ENCODE measurements at regions of chr2 and their contacts with region 1.

Region 1: DNA sequence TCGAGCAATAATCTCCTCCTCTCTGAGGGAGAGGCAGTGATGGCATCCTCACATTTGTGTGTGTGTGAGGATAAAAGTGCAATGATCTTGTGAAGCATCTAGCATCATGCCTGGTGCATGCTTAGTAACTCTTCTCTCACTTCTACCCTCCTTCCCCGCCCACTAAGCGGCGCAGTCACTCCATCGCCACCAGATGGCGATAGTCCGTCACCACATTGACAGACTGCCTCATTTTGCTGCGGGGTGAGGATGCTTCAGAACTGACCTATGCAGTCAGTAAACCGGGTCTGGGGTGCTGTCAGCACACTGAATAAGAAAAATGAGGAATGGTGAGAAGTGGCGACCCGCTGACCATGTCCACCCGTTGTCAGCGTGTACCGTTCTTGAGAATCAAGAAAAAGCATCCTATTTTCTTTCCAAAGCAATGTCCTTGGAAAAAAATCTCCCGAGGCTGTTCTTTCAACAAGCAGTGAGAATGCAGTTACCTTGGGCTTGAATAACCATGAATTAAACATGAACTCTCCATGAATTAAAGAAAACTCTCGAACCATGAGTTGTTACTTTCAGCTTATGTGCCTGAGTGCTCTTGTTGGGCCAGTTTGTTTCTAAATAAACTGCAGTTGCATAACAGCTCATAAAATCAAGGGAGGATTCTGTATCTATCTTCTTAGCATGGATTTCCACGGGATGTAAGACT is 37.3 kb upstream of the TMEM177 start:
- ATAC-seq: peak; percentile 56 to 99 (median 78)
- H3K4me3 ChIP-seq: peak overlapping the region in 4 of 5 donors; percentile 8 to 17 (median 12)
- H3K27ac ChIP-seq: no peak overlapping the region
- H3K4me1 ChIP-seq: peaks cover 18 to 24% of the 10 kb centered on the region in 2 donors

Region 2: DNA sequence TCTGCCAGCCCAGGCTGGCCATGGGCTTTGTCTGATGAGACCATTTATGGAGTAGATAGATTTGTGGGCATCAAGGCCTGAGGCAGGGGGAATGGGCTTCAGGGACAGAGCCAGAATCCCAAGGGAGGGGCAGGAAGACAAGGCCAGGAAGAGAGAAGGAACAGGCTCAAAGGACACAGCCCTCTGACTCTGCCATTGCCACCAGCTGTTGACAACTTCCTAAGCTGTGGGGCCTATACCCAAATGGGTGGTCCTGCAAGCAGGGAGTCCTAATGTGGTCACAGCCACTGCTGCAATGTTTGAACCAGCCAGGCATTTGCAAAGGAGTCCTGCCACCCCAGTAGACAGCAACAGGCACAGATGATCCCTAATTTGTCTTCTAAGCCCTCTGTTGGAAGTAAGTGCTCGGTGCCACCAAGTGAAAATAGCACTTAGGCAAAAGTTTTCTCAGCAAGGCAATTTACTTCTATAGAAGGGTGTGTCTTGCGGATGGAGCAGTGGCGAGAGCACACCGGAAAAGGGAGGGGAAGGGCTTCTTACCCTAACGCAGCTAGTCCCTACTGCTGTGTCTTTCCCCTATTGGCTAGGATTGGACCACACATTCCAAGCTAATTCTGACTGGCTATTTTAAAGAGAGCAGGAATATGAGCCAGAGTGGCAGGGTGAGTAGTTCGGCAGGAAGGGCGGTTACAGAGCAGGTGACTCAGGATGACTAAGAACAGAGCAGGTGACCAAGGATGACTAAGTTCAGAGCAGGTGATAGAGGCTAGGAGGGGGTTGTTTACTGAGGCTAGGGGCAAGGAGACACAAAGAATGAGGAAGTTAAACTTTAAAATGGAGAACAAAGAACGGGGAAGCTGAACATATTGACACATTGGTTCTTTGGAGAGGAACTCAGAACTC is 530.3 kb before region 1 on chr2:
- in situ Hi-C with region 1: no loop called
- ATAC-seq: no peak
- H3K4me3 ChIP-seq: no peak overlapping the region
- H3K27ac ChIP-seq: no peak overlapping the region
- H3K4me1 ChIP-seq: no peaks in the 10 kb centered on the region

Region 3: GRCh38 chr2:119301413-119301812 is 340.3 kb before region 1 on chr2:
- in situ Hi-C with region 1: no loop called
- ATAC-seq: no peak
- H3K4me3 ChIP-seq: no peak overlapping the region
- H3K27ac ChIP-seq: no peak overlapping the region
- H3K4me1 ChIP-seq: peaks cover 0 to 9% of the 10 kb centered on the region in 2 donors

Region 4: GRCh38 chr2:119366649-119367471 is 274.9 kb before region 1 on chr2 and contains the starts of genes C2orf76 and DBI:
- in situ Hi-C with region 1: no loop called
- ATAC-seq: peak; percentile 90 to 97 (median 95)
- H3K4me3 ChIP-seq: peak within 1 kb of the TSS; percentile 48 to 84 (median 66)
- H3K27ac ChIP-seq: peak within 1 kb of the TSS in 1 of 2 donors; percentile 54
- H3K4me1 ChIP-seq: peaks cover 12 to 14% of the 10 kb centered on the region in 2 donors
- total RNA-seq, gene C2orf76: 9.5 to 25.1 (median 13.3) TPM
- total RNA-seq, gene DBI: 50.3 to 336 (median 137) TPM

Region 5: GRCh38 chr2:119517433-119517832 is 124.3 kb before region 1 on chr2:
- in situ Hi-C with region 1: loop called in 1 of 9 experiments (anchors 25 kb)
- ATAC-seq: peak in 4 of 8 experiments; percentile 39 to 94 (median 90)
- H3K4me3 ChIP-seq: no peak overlapping the region
- H3K27ac ChIP-seq: no peak overlapping the region
- H3K4me1 ChIP-seq: no peaks in the 10 kb centered on the region

Region 6: DNA sequence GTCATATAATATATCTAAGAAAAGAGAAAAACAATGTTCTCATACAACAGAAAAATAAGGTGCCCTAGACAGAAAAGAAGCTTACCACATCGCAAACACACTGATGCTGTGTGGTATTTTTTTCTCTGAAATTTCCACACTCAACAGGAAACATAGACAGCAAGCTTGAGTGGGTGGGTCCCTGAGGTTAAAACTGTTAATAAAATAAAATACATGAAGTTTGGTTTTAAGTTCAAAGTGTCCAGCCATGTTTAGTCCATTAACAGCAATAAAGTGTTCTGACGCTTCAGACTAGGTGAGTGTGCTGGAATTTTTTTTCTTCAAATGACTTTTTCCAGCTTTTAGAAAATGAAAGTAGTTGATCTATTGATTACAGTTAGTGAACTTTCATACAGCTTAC is 287.8 kb after region 1 on chr2:
- in situ Hi-C with region 1: no loop called
- ATAC-seq: no peak
- H3K4me3 ChIP-seq: no peak overlapping the region
- H3K27ac ChIP-seq: no peak overlapping the region
- H3K4me1 ChIP-seq: no peaks in the 10 kb centered on the region